ENCODE measurements at regions of chr4 and their contacts with region 1.

Region 1: DNA sequence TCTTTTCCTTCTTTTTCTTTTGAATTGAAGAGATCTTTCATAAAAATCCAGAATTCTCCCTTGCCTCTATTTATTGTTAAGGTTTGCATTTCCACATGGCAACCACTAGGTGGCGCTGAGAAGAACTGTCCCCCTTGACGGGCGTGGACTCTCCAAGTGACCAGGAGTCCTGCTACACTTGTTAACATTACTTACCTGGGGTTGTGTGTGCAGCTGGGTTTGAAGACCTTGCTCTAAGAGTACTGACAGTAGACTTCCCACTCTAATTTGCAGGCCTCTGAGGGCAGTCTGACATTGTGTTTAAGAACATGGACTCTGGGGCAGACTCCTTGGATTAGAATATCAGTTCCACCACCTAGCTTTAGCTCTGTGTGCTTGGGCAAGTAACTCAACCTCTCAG is 52.8 kb downstream of the GPRIN3 start:
- DNase-seq: peak; percentile 50
- H3K4me3 Mint-ChIP-seq: no peak overlapping the region
- H3K27ac Mint-ChIP-seq: peak overlapping the region; percentile 52
- H3K4me1 Mint-ChIP-seq: peaks cover 75% of the 10 kb centered on the region
- H3K27me3 Mint-ChIP-seq: no peaks in the 10 kb centered on the region

Region 2: DNA sequence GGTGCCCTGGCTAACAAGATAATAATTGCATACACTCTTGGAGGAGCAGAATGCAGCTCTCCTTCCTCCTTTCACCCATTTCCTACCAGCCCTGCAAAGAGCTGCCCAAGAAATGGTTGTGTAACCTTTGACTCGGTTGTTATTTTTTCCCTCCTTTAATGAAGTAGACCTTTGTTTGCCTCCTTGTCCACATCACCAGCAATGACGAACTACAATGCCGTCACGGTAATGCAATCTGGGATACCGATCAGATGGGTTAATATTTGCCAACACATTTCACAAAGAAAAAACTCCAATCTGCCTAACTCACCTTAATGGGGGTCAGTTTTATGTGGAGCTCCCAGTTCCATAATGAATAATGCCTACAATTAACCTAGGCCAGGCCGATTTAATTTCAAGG is 20.7 kb after region 1 on chr4:
- CTCF ChIA-PET with region 1: interaction called, 11 read pairs
- POLR2A ChIA-PET with region 1: interaction called, 7 read pairs
- DNase-seq: no peak
- H3K4me3 Mint-ChIP-seq: no peak overlapping the region
- H3K27ac Mint-ChIP-seq: no peak overlapping the region
- H3K4me1 Mint-ChIP-seq: peaks cover 69% of the 10 kb centered on the region
- H3K27me3 Mint-ChIP-seq: no peaks in the 10 kb centered on the region